A549 (cell line): ENCODE measurements at regions of chr1 and their contacts with region 1.

Region 1: GRCh38 chr1:39098546-39099250 is 72.5 kb downstream of the NDUFS5 start:
- DNase-seq: peak; percentile 93
- ATAC-seq: peak; percentile 82 to 87
- H3K4me3 ChIP-seq: no peak overlapping the region
- H3K27ac ChIP-seq: peak overlapping the region in 1 of 2 experiments; percentile 38; a peak in 1 of 6 replicates
- H3K4me1 ChIP-seq: peaks cover 17% of the 10 kb centered on the region
- CTCF ChIP-seq: peak; percentile 76
- EP300 ChIP-seq: no peak
- POLR2A ChIP-seq: no peak
- RAD21 ChIP-seq: peak; percentile 85 to 92

Region 2: GRCh38 chr1:38990738-38991639 is 107.7 kb before region 1 on chr1 and contains the start of gene AKIRIN1:
- CTCF ChIA-PET with region 1: no interaction called
- POLR2A ChIA-PET with region 1: no interaction called
- DNase-seq: peak; percentile 87 to 95
- ATAC-seq: peak; percentile 91 to 96
- H3K4me3 ChIP-seq: peak within 1 kb of the TSS; percentile 100
- H3K27ac ChIP-seq: peak within 1 kb of the TSS; percentile 98 to 99
- H3K4me1 ChIP-seq: peaks cover 35% of the 10 kb centered on the region
- CTCF ChIP-seq: no peak
- EP300 ChIP-seq: no peak; a peak in 1 of 5 replicates
- POLR2A ChIP-seq: peak; percentile 84
- RAD21 ChIP-seq: no peak
- polyA plus RNA-seq, gene AKIRIN1: 62.0 and 72.0 TPM in 2 replicates

Region 3: GRCh38 chr1:39061951-39062350 is 36.7 kb before region 1 on chr1:
- CTCF ChIA-PET with region 1: no interaction called
- POLR2A ChIA-PET with region 1: no interaction called
- DNase-seq: peak in 1 of 2 experiments; percentile 38
- ATAC-seq: no peak
- H3K4me3 ChIP-seq: no peak overlapping the region
- H3K27ac ChIP-seq: no peak overlapping the region
- H3K4me1 ChIP-seq: no peaks in the 10 kb centered on the region
- CTCF ChIP-seq: no peak
- EP300 ChIP-seq: no peak
- POLR2A ChIP-seq: no peak
- RAD21 ChIP-seq: no peak

Region 4: GRCh38 chr1:39110325-39110851 is 11.7 kb after region 1 on chr1:
- CTCF ChIA-PET with region 1: interaction called, 19 read pairs
- POLR2A ChIA-PET with region 1: no interaction called
- DNase-seq: no peak
- ATAC-seq: no peak
- H3K4me3 ChIP-seq: no peak overlapping the region
- H3K27ac ChIP-seq: peak overlapping the region in 1 of 2 experiments; percentile 76; a peak in 4 of 6 replicates
- H3K4me1 ChIP-seq: peaks cover 53% of the 10 kb centered on the region
- CTCF ChIP-seq: no peak
- EP300 ChIP-seq: no peak
- POLR2A ChIP-seq: no peak
- RAD21 ChIP-seq: no peak

Region 5: DNA sequence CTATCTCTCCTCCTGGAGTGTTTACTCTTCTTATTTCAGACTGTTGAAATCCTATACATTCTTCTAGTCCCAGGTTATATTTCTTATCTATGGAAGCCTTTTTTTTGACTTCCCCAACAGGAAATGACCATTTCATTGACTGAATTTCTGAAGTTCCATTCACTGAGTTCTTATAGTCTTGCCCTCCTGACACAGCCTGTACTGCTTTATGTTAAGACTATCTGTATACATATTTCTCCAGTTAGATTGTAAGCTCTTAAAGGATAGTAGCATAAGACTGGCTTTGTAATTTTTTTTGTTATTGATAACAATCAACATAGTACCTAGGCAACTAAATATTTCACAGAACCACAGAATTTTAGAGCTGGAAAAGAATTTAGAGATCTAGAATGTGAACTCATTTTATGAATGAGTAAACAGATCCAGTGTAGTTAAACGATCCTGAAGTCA is 90.9 kb after region 1 on chr1:
- CTCF ChIA-PET with region 1: interaction called, 40 read pairs
- POLR2A ChIA-PET with region 1: no interaction called
- DNase-seq: no peak
- ATAC-seq: no peak
- H3K4me3 ChIP-seq: no peak overlapping the region
- H3K27ac ChIP-seq: peak overlapping the region; percentile 83 to 94
- H3K4me1 ChIP-seq: peaks cover 92% of the 10 kb centered on the region
- CTCF ChIP-seq: no peak
- EP300 ChIP-seq: no peak
- POLR2A ChIP-seq: no peak
- RAD21 ChIP-seq: no peak

Region 6: DNA sequence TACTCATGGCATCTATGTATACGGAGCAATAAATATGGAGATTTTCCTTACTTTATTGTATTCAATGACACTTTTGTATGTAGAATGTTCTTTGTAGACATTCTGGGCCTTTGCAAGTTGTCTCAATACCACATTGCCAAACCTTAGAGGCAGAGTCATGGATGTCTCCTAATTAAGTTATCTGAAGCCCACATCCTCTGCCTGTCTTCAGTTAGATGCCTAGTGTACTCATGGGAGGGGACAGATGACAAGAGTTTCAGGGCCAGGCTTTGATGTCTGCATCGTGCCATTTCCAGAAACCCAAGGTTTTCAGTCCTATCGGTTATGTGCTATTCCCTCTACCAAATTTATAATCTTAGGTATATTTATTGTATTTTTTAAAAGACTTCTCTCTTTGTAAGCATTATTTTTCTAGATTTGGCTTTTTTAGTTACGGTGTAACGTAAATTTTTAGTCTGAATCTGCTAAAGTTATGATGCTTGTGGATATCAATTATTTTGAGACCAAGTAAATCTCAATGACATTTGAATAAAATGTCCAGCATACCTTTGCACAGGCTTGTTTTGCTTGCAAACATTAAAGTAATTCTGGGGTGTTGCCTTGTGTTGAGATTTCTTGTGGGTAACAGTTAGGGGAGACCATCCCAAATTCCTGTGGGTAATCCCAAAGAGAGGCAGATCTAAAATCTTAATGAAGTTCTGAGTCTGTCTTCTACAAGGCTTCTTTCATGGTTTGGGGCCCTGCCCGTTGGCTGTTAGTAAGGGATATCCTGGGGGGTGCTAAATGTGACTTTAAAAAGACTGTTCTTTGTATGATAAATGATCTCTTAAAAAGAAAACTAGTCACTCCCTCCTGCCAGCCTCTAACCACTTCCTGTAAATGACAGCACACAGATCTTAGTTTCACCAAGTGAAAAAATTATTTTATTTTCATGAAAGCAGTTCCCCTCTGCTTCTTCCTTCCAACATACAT is 97.8 kb after region 1 on chr1:
- CTCF ChIA-PET with region 1: interaction called, 40 read pairs
- POLR2A ChIA-PET with region 1: no interaction called
- DNase-seq: no peak
- ATAC-seq: no peak
- H3K4me3 ChIP-seq: no peak overlapping the region
- H3K27ac ChIP-seq: peak overlapping the region in 1 of 2 experiments; percentile 94; a peak in 3 of 6 replicates
- H3K4me1 ChIP-seq: peaks cover 63% of the 10 kb centered on the region
- CTCF ChIP-seq: no peak
- EP300 ChIP-seq: no peak
- POLR2A ChIP-seq: no peak
- RAD21 ChIP-seq: no peak

Region 7: DNA sequence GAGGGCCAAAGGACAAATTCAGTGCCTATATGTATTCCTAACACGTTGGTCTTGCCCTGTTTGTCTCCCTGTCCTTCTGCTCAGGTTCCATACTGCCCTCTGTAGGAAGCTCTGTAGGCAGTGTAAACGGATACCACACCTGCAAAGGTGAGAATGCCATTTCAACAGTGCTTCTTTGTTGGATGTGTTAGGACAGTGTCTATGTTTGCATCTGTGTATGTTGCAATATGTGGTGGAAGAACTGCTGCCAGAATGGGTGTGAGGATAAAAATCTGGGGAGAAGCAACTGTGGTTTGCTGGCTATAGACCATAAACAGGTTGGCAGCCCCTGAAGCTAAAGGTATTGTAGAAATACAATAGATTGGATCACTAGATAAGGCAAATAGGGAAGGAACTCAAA is 279.7 kb after region 1 on chr1:
- CTCF ChIA-PET with region 1: interaction called, 11 read pairs
- POLR2A ChIA-PET with region 1: no interaction called
- DNase-seq: peak; percentile 30 to 47
- ATAC-seq: peak in 1 of 2 experiments; percentile 79; a peak in 4 of 6 replicates
- H3K4me3 ChIP-seq: no peak overlapping the region
- H3K27ac ChIP-seq: no peak overlapping the region
- H3K4me1 ChIP-seq: no peaks in the 10 kb centered on the region
- CTCF ChIP-seq: peak; percentile 55
- EP300 ChIP-seq: no peak
- POLR2A ChIP-seq: no peak
- RAD21 ChIP-seq: peak; percentile 48 to 50; a peak in 4 of 5 replicates

Region 8: DNA sequence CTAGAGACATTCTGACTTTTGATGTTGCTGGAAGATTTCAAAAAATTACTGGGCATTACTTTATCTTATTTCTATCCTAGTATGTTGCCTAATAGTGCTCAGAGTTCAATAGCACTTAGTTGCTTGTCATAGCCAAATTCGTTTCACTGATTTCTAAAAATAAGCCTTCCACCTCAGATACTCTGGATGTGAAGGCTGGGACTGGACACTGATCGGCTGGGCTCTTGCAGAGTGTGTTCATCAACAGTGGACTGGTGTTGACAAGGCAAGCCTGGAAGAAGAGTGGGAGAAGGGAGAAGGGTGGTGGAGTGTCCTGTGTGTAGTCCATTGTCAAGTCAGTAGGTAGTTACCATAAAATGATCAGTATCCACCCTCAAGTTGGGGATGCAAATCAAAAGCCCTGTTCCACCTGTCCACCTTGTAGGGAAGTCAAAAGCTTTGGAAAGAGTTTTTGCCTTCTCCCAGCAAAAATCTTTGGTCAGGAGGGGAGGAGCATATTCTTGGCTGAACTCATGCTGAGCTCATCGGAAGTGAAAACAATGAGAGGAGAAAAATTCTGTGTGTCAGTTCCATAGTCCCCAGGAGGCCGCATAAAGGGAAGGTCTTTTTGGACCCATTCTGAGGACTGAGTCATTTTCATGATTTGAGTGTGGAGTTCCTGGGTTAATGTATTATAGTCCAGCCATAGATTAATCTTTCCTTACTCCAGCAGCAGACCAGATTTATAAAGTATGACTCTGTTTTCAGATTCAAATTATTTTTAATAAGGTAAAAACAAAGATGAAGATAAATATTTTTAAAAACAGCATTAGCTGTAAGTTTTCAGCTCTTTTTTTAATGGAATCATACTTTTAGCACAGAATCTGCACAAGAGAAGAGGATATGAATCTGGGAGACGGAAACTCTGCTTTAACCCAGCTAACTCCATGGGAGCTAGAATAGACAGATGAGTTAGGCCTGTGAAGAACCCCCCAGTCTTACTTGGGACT is 293.3 kb after region 1 on chr1:
- CTCF ChIA-PET with region 1: interaction called, 12 read pairs
- POLR2A ChIA-PET with region 1: no interaction called
- DNase-seq: peak; percentile 74 to 75
- ATAC-seq: peak; percentile 76 to 85
- H3K4me3 ChIP-seq: peak overlapping the region; percentile 19; the same call in 1 of the 3 replicates
- H3K27ac ChIP-seq: peak overlapping the region; percentile 89 to 93
- H3K4me1 ChIP-seq: peaks cover 75% of the 10 kb centered on the region
- CTCF ChIP-seq: no peak
- EP300 ChIP-seq: peak in 1 of 2 experiments; percentile 39; a peak in 1 of 5 replicates
- POLR2A ChIP-seq: no peak
- RAD21 ChIP-seq: no peak

Region 9: GRCh38 chr1:39538588-39539465 is 440.1 kb after region 1 on chr1:
- CTCF ChIA-PET with region 1: interaction called, 28 read pairs
- POLR2A ChIA-PET with region 1: no interaction called
- DNase-seq: peak; percentile 63 to 70
- ATAC-seq: peak; percentile 98 to 99
- H3K4me3 ChIP-seq: no peak overlapping the region
- H3K27ac ChIP-seq: peak overlapping the region in 1 of 2 experiments; percentile 59; a peak in 1 of 6 replicates
- H3K4me1 ChIP-seq: no peaks in the 10 kb centered on the region
- CTCF ChIP-seq: peak; percentile 81
- EP300 ChIP-seq: no peak
- POLR2A ChIP-seq: no peak
- RAD21 ChIP-seq: peak; percentile 72 to 81